ENCODE measurements at regions of chr4 and their contacts with region 1.

Region 1: GRCh38 chr4:124334119-124334518 is 378.4 kb downstream of the ANKRD50 start:
- DNase-seq: peak; percentile 36
- H3K4me3 Mint-ChIP-seq: no peak overlapping the region
- H3K27ac Mint-ChIP-seq: no peak overlapping the region
- H3K4me1 Mint-ChIP-seq: no peaks in the 10 kb centered on the region
- H3K27me3 Mint-ChIP-seq: no peaks in the 10 kb centered on the region
- CTCF ChIP-seq: no peak

Region 2: GRCh38 chr4:124191329-124191728 is 142.8 kb before region 1 on chr4:
- CTCF ChIA-PET with region 1: no interaction called
- intact Hi-C with region 1: no loop called
- DNase-seq: no peak
- H3K4me3 Mint-ChIP-seq: no peak overlapping the region
- H3K27ac Mint-ChIP-seq: no peak overlapping the region
- H3K4me1 Mint-ChIP-seq: no peaks in the 10 kb centered on the region
- H3K27me3 Mint-ChIP-seq: no peaks in the 10 kb centered on the region
- CTCF ChIP-seq: no peak

Region 3: DNA sequence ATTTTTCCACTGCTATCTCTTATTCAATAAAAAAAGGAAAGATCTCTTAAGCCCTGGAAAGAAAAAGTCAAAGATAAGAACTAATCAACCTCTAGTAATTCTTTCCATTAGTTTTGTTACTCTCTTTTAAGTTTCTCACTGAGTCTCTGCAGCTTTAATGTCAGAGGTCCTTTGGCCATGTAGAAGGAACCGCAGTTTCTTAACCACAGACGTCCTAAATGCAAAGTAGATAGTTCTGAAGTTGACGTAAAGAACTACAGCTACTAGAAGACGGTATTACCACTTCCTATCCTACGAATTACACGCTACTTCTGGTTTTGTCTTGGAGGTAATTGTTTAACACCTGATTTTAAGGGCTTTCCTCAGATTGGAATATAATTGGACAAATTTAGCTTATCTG is 52.5 kb after region 1 on chr4:
- CTCF ChIA-PET with region 1: no interaction called
- intact Hi-C with region 1: no loop called
- DNase-seq: no peak
- H3K4me3 Mint-ChIP-seq: no peak overlapping the region
- H3K27ac Mint-ChIP-seq: no peak overlapping the region
- H3K4me1 Mint-ChIP-seq: no peaks in the 10 kb centered on the region
- H3K27me3 Mint-ChIP-seq: no peaks in the 10 kb centered on the region
- CTCF ChIP-seq: no peak

Region 4: DNA sequence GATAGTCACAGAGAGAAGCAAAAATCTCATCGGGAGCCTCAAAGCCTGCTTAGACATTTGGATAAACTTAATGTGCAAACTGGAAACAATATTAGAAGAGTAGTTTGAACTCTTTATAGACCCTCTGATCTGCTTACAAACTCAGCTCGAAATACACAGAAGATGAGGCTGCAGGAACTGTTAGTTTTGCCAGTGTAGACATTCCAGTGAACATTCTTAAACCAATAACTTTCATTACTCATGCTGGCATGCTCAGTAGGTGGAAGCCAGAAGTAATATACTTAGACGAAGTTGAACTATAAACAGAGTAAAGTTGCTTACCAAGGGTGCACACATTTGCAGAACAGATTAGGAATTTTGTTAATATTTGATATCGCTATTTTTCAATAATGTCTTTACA is 74.9 kb after region 1 on chr4:
- CTCF ChIA-PET with region 1: no interaction called
- intact Hi-C with region 1: no loop called
- DNase-seq: no peak
- H3K4me3 Mint-ChIP-seq: no peak overlapping the region
- H3K27ac Mint-ChIP-seq: no peak overlapping the region
- H3K4me1 Mint-ChIP-seq: no peaks in the 10 kb centered on the region
- H3K27me3 Mint-ChIP-seq: no peaks in the 10 kb centered on the region
- CTCF ChIP-seq: no peak

Region 5: DNA sequence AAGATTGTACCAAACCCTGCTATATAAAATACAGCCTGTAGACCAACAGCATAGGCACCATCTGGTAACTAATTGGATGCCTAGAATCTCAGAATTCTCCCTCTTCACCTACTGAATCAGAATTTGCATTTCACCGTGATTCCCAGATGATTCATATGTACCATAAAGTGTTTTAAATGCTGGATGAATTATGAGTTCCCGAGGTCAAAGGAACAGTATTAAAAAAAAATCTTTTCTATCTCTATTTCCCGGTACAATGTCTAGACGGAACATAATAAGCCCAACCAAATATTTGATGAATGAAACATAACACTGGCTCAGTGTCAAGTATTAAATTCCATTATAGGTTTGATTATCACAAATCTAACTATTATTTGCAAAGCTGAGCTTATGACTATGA is 98.4 kb after region 1 on chr4:
- CTCF ChIA-PET with region 1: no interaction called
- intact Hi-C with region 1: loop called (anchors 5 kb)
- DNase-seq: no peak
- H3K4me3 Mint-ChIP-seq: peak overlapping the region; percentile 26
- H3K27ac Mint-ChIP-seq: peak overlapping the region; percentile 97
- H3K4me1 Mint-ChIP-seq: peaks cover 43% of the 10 kb centered on the region
- H3K27me3 Mint-ChIP-seq: no peaks in the 10 kb centered on the region
- CTCF ChIP-seq: no peak

Region 6: GRCh38 chr4:124712372-124713184 is 378.5 kb after region 1 on chr4 and contains the start of gene ANKRD50:
- CTCF ChIA-PET with region 1: interaction called, 4 read pairs
- intact Hi-C with region 1: loop called (anchors 5 kb)
- DNase-seq: peak; percentile 88
- H3K4me3 Mint-ChIP-seq: no peak within 1 kb of the TSS
- H3K27ac Mint-ChIP-seq: peak within 1 kb of the TSS; percentile 97
- H3K4me1 Mint-ChIP-seq: no peaks in the 10 kb centered on the region
- H3K27me3 Mint-ChIP-seq: no peaks in the 10 kb centered on the region
- CTCF ChIP-seq: no peak
- total RNA-seq, gene ANKRD50: 22.9 and 24.3 TPM in 2 replicates

Region 7: GRCh38 chr4:124828382-124828781 is 494.3 kb after region 1 on chr4:
- CTCF ChIA-PET with region 1: no interaction called
- intact Hi-C with region 1: loop called (anchors 10 kb)
- DNase-seq: no peak
- H3K4me3 Mint-ChIP-seq: no peak overlapping the region
- H3K27ac Mint-ChIP-seq: no peak overlapping the region
- H3K4me1 Mint-ChIP-seq: no peaks in the 10 kb centered on the region
- H3K27me3 Mint-ChIP-seq: no peaks in the 10 kb centered on the region
- CTCF ChIP-seq: no peak

Region 8: GRCh38 chr4:124940387-124940786 is 606.3 kb after region 1 on chr4:
- CTCF ChIA-PET with region 1: no interaction called
- intact Hi-C with region 1: loop called (anchors 10 kb)
- DNase-seq: no peak
- H3K4me3 Mint-ChIP-seq: no peak overlapping the region
- H3K27ac Mint-ChIP-seq: peak overlapping the region; percentile 36
- H3K4me1 Mint-ChIP-seq: peaks cover 51% of the 10 kb centered on the region
- H3K27me3 Mint-ChIP-seq: no peaks in the 10 kb centered on the region
- CTCF ChIP-seq: no peak

Region 9: DNA sequence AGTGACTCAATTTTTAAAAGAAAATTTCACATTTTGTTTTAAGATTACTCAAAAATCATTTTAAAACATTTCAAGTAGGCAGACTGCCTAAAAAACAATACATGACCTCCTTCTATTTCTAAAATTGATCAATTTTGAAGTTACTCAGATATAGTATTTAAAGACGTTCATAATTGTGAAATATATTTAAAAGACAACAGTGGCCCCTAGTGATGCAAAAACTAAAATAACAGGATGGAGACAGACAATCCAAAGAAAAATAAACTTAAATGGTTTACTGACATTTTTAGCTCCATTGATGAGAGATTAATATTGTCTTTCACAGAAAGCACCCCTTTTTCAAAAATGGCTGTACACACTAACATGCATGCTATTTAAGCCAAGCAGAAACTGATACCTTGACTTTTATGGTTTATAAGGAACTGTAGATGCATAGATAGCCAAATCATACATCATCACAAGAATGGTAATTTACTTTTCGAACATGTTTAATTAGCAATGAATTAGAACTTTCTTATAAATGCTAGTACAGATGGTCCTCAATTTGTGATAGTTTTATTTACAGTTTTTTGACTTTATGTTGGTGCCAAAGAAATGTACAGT is 910.8 kb after region 1 on chr4:
- CTCF ChIA-PET with region 1: no interaction called
- intact Hi-C with region 1: loop called (anchors 1 kb)
- DNase-seq: no peak
- H3K4me3 Mint-ChIP-seq: no peak overlapping the region
- H3K27ac Mint-ChIP-seq: no peak overlapping the region
- H3K4me1 Mint-ChIP-seq: no peaks in the 10 kb centered on the region
- H3K27me3 Mint-ChIP-seq: no peaks in the 10 kb centered on the region
- CTCF ChIP-seq: no peak

Region 10: DNA sequence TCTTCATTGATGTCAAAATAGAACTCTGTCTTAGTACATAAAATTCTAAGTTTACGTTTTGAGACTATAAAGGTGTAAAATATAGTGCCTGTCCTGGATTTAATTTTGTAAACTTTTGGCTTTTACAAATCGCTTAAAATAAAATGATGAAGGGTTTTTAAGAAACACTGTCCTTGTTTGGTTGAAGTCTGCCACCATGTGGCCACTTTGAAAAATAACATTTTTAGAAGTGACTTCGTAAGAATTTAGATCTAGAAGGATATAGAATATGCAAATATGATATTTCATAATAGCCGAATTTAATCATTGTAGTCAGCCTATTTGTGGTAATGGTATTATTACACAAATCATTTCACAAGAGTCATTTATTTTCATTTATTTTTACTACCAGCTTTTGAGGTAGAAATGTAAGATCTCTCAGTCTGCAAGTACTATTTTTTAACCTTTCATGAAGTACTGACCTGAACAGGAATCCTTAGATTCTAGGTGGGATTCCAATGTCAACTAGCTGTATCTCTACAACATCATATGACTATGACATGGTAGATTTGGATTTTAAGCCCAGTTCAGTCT is 949.7 kb after region 1 on chr4:
- CTCF ChIA-PET with region 1: interaction called, 8 read pairs
- intact Hi-C with region 1: loop called (anchors 1 kb)
- DNase-seq: peak; percentile 1
- H3K4me3 Mint-ChIP-seq: no peak overlapping the region
- H3K27ac Mint-ChIP-seq: no peak overlapping the region
- H3K4me1 Mint-ChIP-seq: no peaks in the 10 kb centered on the region
- H3K27me3 Mint-ChIP-seq: no peaks in the 10 kb centered on the region
- CTCF ChIP-seq: peak; percentile 30